ENCODE measurements at regions of chr1 and their contacts with region 1.

Region 1: DNA sequence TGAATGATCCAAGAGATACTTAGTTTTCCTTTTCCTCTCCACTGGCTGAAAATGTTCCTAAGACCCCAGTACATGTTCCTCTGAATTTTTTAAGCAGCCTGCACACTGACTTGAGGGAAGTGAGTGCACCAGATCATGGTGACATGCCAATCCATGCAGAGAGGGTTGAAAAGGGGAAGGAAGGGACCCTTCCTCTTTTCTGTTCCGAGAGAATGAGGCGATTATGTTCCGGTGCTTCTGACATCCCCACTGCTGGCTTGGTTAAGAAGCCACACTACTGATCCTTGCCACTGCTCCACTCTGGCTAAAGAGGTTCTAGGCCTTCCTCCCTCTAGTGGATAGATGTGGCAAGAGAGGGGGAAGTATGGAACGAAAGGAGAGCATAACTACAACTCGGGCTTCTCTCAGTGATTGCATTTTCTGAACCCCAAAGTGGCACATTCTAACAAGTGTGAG is 1.8 kb upstream of the CYB5R1 start:
- DNase-seq: peak in 3 of 10 donors; percentile 11 to 22 (median 18)

Region 2: DNA sequence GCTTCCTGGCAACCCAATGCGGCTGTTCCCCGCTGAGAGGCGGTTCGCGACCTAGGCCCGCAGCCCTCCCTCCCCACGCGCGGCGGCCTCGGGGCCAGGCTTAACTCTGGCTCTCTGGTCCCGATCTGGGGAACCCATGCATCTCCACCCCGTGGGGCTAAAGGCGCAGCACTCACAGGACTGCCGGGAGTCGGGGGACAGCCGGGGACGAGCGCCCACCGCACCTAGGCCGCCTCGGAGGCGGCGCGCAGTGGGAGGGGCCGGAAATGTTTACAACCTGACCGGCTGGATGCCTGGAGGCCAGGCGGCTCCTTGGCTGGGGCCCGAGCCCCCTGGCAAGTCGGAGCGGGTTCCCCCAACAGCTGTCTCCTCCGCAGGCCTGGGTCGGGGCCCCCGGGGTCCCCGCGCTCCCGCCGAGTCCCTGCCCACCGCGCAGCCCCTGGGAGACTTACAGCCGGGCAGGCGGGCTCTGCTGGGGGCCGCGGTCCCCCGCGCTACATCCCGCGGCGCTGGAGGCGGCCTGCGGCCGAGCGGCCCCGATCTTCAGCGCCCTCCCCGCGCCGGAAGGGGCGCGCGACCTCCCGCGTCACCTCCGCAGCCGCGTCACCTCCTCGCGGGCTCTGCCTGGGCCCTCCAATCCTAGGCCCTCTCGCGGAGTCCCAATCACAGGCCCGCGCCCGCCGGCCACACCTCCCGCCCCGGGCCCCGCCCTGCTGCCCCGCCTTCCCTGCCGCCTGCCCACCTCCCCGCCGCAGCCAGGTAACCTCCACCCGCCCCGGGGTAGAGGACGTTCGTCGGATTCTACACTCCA is 10.9 kb before region 1 on chr1 and contains the start of gene ADIPOR1:
- intact Hi-C with region 1: loop called (anchors 1 kb)
- DNase-seq: peak; percentile 84 to 99 (median 93)

Measured in posterior cingulate gyrus (tissue), 11 donors.